ENCODE measurements at regions of chr2 and their contacts with region 1.

Region 1: GRCh38 chr2:156589381-156590079 is 153.4 kb downstream of the GPD2 start:
- DNase-seq: peak; percentile 35

Region 2: GRCh38 chr2:156341452-156342253 is 247.9 kb before region 1 on chr2:
- in situ Hi-C with region 1: loop called (anchors 25 kb)
- DNase-seq: peak; percentile 93

Region 3: GRCh38 chr2:156526950-156527636 is 62.4 kb before region 1 on chr2:
- in situ Hi-C with region 1: no loop called
- DNase-seq: no peak